Activated CD4-positive, alpha-beta memory T cell treated with anti-CD3 and anti-CD28 coated beads, Interleukin-2, amount 10 ng/mL, durations not matched to agents 7 days and 5 days (primary cell): ENCODE measurements at regions of chr18 and their contacts with region 1.

Region 1: GRCh38 chr18:12391618-12392165 is 14.7 kb upstream of the AFG3L2 start:
- DNase-seq: peak; percentile 59
- H3K4me3 Mint-ChIP-seq: no peak overlapping the region
- H3K27ac Mint-ChIP-seq: no peak overlapping the region
- H3K4me1 Mint-ChIP-seq: no peaks in the 10 kb centered on the region
- H3K27me3 Mint-ChIP-seq: peaks cover 5% of the 10 kb centered on the region

Region 2: GRCh38 chr18:12659904-12660605 is 268.4 kb after region 1 on chr18:
- CTCF ChIA-PET with region 1: interaction called, 25 read pairs
- POLR2A ChIA-PET with region 1: interaction called, 8 read pairs
- DNase-seq: peak; percentile 54
- H3K4me3 Mint-ChIP-seq: no peak overlapping the region
- H3K27ac Mint-ChIP-seq: no peak overlapping the region
- H3K4me1 Mint-ChIP-seq: peaks cover 18% of the 10 kb centered on the region
- H3K27me3 Mint-ChIP-seq: peaks cover 15% of the 10 kb centered on the region